CD4-positive, alpha-beta memory T cell (primary cell): ENCODE measurements at regions of chr2 and their contacts with region 1.

Region 1: GRCh38 chr2:201071479-201072200 is at the starts of genes HYCC2 and NDUFB3:
- DNase-seq: peak; percentile 95 to 96 (median 95)
- H3K4me3 ChIP-seq: peak within 1 kb of the TSS; percentile 94 to 96
- H3K4me3 Mint-ChIP-seq: peak within 1 kb of the TSS; percentile 91 to 100 (median 98)
- H3K27ac ChIP-seq: peak within 1 kb of the TSS; percentile 79
- H3K27ac Mint-ChIP-seq: peak within 1 kb of the TSS; percentile 94 to 99 (median 98)
- H3K4me1 ChIP-seq: peaks cover 52% of the 10 kb centered on the region
- H3K4me1 Mint-ChIP-seq: peaks cover 35 to 62% (median 46%) of the 10 kb centered on the region in 4 donors
- H3K27me3 ChIP-seq: no peaks in the 10 kb centered on the region
- H3K27me3 Mint-ChIP-seq: peaks cover 0 to 2% of the 10 kb centered on the region in 2 donors
- total RNA-seq, gene HYCC2: 33.1 to 36.4 TPM
- total RNA-seq, gene NDUFB3: 48.7 to 53.6 TPM

Region 2: GRCh38 chr2:200575957-200576356 is 495.7 kb before region 1 on chr2:
- CTCF ChIA-PET with region 1: no interaction called
- POLR2A ChIA-PET with region 1: no interaction called
- intact Hi-C with region 1: loop called (anchors 2 kb)
- DNase-seq: peak in 3 of 5 donors; percentile 10 to 23 (median 18)
- H3K4me3 ChIP-seq: no peak overlapping the region
- H3K4me3 Mint-ChIP-seq: no peak overlapping the region
- H3K27ac ChIP-seq: no peak overlapping the region
- H3K27ac Mint-ChIP-seq: peak overlapping the region in 1 of 7 donors; percentile 14
- H3K4me1 ChIP-seq: no peaks in the 10 kb centered on the region
- H3K4me1 Mint-ChIP-seq: peaks cover 0 to 4% (median under 1%) of the 10 kb centered on the region in 4 donors
- H3K27me3 ChIP-seq: no peaks in the 10 kb centered on the region
- H3K27me3 Mint-ChIP-seq: no peaks in the 10 kb centered on the region

Region 3: DNA sequence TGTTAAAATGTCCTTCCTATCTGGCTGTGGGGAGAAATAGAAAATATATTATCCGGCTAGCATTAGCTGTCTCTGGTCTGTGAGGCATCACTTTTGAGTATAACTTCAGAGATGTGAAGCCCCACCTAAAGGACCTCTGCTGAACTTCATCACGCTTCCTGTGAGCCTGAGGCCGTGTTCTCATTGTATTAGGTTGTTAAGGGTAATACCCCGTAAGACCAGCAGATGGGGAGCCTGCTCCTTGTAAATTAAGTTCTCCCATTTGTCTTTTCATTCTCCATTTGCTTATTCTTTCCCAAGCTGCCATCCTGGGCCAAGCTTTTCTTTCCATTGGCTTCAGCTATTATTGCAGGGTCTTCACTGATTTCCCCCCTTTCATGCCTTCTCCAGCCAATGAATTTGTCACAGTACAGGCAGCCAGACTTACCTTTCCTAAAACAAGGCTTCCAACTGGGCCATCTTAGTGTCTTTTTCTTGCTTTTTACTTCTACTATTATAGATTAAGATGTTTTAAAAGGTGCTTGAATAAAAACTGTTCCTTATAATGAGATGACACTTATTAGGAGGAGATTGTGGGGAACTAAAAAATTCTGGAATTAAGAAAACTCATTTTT is 170.1 kb before region 1 on chr2:
- CTCF ChIA-PET with region 1: interaction called, 115 read pairs
- POLR2A ChIA-PET with region 1: interaction called, 17 read pairs
- intact Hi-C with region 1: loop called (anchors 1 kb)
- DNase-seq: peak; percentile 76 to 83 (median 79)
- H3K4me3 ChIP-seq: no peak overlapping the region
- H3K4me3 Mint-ChIP-seq: no peak overlapping the region
- H3K27ac ChIP-seq: peak overlapping the region; percentile 1
- H3K27ac Mint-ChIP-seq: peak overlapping the region; percentile 10 to 81 (median 65)
- H3K4me1 ChIP-seq: no peaks in the 10 kb centered on the region
- H3K4me1 Mint-ChIP-seq: peaks cover 6 to 7% (median 6%) of the 10 kb centered on the region in 4 donors
- H3K27me3 ChIP-seq: no peaks in the 10 kb centered on the region
- H3K27me3 Mint-ChIP-seq: no peaks in the 10 kb centered on the region

Region 4: DNA sequence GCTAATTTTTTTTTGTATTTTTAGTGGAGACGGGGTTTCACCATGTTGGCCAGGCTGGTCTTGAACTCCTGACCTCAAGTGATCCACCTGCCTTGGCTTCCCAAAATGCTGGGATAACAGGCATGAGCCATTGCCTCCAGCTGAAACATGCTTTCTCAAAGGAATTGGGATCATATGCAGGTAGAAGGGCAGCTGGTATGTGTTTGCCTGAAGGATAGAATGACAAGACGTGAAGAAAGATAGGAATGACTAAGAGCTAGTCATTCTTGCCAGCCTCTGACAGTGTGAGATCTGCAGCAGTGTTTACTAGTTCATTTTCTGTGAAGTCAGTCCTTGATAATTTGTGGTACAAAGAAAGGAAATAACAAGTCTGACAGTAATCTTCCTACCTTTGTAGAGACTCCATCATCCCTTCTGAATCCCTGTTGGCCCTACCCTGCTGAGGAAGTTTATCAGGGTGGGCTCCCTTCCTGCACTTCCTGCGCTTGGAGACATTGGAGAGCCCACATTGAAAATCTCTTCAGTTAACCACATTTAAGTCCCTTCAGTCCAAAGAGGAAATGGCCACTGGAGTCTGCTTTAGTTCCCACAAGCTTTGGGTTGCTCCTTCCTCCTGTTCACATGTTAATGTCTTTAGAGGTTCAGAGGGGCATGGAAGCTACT is 59.0 kb after region 1 on chr2:
- CTCF ChIA-PET with region 1: interaction called, 9 read pairs
- POLR2A ChIA-PET with region 1: interaction called, 18 read pairs
- intact Hi-C with region 1: no loop called
- DNase-seq: peak; percentile 42 to 85 (median 55)
- H3K4me3 ChIP-seq: peak overlapping the region in 1 of 2 donors; percentile 34
- H3K4me3 Mint-ChIP-seq: peak overlapping the region; percentile 72 to 86 (median 80)
- H3K27ac ChIP-seq: peak overlapping the region; percentile 64
- H3K27ac Mint-ChIP-seq: peak overlapping the region; percentile 87 to 98 (median 97)
- H3K4me1 ChIP-seq: peaks cover 89% of the 10 kb centered on the region
- H3K4me1 Mint-ChIP-seq: peaks cover 64 to 81% (median 72%) of the 10 kb centered on the region in 4 donors
- H3K27me3 ChIP-seq: no peaks in the 10 kb centered on the region
- H3K27me3 Mint-ChIP-seq: no peaks in the 10 kb centered on the region

Region 5: DNA sequence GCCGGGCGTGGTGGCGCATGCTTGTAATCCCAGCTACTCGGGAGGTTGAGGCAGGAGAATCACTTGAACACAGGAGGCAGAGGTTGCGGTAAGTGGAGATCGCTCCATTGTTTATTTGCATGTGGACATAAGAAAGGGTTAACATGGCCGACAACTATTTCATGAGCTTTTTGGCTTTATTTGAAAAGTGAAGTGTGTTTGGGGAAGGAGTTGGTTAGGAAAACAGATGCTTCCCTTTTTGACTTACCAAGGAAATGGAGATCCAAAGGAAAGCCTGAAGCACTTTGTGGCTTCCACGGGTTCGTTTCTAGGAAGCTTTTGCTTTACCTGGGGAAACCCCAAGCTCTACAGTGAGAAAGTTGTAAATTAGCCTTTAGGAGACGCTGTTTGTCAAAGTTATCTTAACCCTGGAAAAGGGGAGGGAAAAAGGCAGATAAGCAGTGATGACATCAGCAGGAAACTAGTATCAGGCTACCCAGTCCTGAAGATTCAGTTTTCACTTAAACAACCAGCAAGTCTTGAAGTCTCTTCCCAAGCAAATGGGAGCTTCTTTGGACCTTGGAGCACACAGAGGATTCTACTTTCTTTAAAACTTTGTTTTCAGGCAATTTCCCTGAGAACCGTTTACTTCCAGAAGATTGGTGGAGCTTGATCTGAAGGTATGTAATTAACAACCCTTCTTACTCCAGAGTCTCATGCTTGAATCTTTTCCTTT is 111.2 kb after region 1 on chr2 and contains the start of gene CASP10:
- CTCF ChIA-PET with region 1: interaction called, 13 read pairs
- POLR2A ChIA-PET with region 1: interaction called, 5 read pairs
- intact Hi-C with region 1: no loop called
- DNase-seq: peak; percentile 62 to 81 (median 76)
- H3K4me3 ChIP-seq: peak within 1 kb of the TSS; percentile 54 to 87
- H3K4me3 Mint-ChIP-seq: peak within 1 kb of the TSS; percentile 90 to 99 (median 96)
- H3K27ac ChIP-seq: peak within 1 kb of the TSS; percentile 75
- H3K27ac Mint-ChIP-seq: peak within 1 kb of the TSS; percentile 92 to 98 (median 96)
- H3K4me1 ChIP-seq: peaks cover 37% of the 10 kb centered on the region
- H3K4me1 Mint-ChIP-seq: peaks cover 28 to 54% (median 40%) of the 10 kb centered on the region in 4 donors
- H3K27me3 ChIP-seq: no peaks in the 10 kb centered on the region
- H3K27me3 Mint-ChIP-seq: no peaks in the 10 kb centered on the region
- total RNA-seq, gene CASP10: 30.6 to 36.6 TPM

Region 6: DNA sequence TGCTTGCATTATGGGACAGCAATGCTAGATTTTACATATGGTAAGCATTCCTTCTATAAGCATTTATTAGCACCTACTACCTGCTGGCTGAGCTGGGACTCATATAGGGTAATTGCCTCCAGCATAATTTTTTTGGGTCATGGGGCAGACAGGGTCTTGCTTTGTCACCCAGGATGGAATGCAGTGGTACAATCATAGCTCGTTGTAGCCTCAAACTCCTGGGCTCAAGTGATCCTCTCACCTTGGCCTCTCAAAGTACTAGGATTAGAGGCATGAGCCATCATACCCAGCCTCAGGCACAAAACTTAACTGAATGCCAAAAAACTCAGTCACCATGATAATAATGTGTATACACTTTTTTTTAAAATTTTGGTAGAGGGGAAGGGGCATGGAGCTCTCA is 536.4 kb after region 1 on chr2:
- CTCF ChIA-PET with region 1: no interaction called
- POLR2A ChIA-PET with region 1: no interaction called
- intact Hi-C with region 1: no loop called
- DNase-seq: no peak
- H3K4me3 ChIP-seq: no peak overlapping the region
- H3K4me3 Mint-ChIP-seq: no peak overlapping the region
- H3K27ac ChIP-seq: no peak overlapping the region
- H3K27ac Mint-ChIP-seq: no peak overlapping the region
- H3K4me1 ChIP-seq: no peaks in the 10 kb centered on the region
- H3K4me1 Mint-ChIP-seq: no peaks in the 10 kb centered on the region
- H3K27me3 ChIP-seq: no peaks in the 10 kb centered on the region
- H3K27me3 Mint-ChIP-seq: peaks cover 17 to 23% of the 10 kb centered on the region in 2 donors